ENCODE measurements at regions of chr14 and their contacts with region 1.

Region 1: DNA sequence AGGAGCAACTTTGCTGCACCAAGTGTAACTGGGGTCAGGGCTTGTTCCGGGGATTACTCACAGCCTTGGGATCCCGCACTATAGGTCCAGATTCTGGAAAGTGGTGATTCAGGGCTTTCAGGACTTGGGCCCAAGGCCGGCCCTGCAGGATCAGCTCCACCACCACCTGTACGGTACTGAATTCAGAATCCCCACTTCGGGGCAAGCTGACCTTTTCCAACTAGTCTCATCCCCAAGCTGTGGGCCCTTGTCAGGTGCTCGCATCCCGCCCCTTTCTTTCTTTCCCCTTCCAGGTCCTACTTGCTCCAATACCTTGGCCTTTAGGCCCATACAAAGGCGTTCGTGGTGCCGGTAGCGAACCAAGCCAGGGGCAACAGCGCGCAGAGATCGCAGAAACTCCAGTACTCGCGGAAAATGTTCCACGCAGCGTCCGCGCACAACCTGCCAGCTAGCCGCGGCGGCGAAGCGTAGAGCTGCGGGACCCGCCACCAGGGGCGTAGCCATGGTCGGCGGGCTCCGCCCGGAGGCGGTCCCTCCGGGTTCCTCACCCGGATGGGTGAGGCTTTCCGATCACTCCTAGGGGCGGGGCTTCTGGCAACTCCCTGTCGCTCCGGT is 487 bp downstream of the TINF2 start:
- DNase-seq: peak; percentile 92 to 97 (median 95)
- H3K4me3 ChIP-seq: peak overlapping the region; percentile 79
- H3K4me3 Mint-ChIP-seq: peak overlapping the region; percentile 93 to 99 (median 98)
- H3K27ac ChIP-seq: peak overlapping the region; percentile 99
- H3K27ac Mint-ChIP-seq: peak overlapping the region; percentile 98 to 100 (median 100)
- H3K4me1 ChIP-seq: peaks cover 51% of the 10 kb centered on the region
- H3K4me1 Mint-ChIP-seq: peaks cover 63 to 76% (median 76%) of the 10 kb centered on the region in 3 donors
- H3K27me3 ChIP-seq: no peaks in the 10 kb centered on the region
- H3K27me3 Mint-ChIP-seq: peaks cover 0 to 2% of the 10 kb centered on the region in 2 donors

Region 2: DNA sequence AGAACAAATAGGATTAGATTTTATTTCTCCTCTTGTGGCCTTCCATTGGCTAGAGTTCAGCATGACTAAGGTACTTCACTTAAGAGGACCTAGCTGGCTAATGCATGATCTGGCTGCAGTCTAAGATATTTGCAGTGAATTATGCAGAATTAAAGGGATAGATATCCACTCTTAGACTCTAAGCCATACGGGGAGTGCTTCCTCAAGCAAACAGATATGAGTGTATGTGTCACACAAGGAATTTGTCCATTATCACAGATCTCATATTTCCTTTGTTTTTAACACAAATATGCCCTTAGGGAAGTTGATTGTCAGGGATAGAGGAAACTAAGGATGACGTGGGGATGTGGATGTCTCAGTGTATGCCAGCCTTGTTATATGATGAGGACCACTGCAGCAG is 376.4 kb before region 1 on chr14:
- CTCF ChIA-PET with region 1: no interaction called
- POLR2A ChIA-PET with region 1: no interaction called
- DNase-seq: no peak
- H3K4me3 ChIP-seq: no peak overlapping the region
- H3K4me3 Mint-ChIP-seq: no peak overlapping the region
- H3K27ac ChIP-seq: no peak overlapping the region
- H3K27ac Mint-ChIP-seq: no peak overlapping the region
- H3K4me1 ChIP-seq: no peaks in the 10 kb centered on the region
- H3K4me1 Mint-ChIP-seq: no peaks in the 10 kb centered on the region
- H3K27me3 ChIP-seq: peaks cover 7% of the 10 kb centered on the region
- H3K27me3 Mint-ChIP-seq: peaks cover 3 to 45% of the 10 kb centered on the region in 2 donors

Region 3: GRCh38 chr14:24114536-24115450 is 127.1 kb before region 1 on chr14 and contains the starts of genes DCAF11 and NRL:
- CTCF ChIA-PET with region 1: interaction called, 3 read pairs
- POLR2A ChIA-PET with region 1: interaction called, 13 read pairs
- DNase-seq: peak; percentile 97 to 100 (median 99)
- H3K4me3 ChIP-seq: peak within 1 kb of the TSS; percentile 99
- H3K4me3 Mint-ChIP-seq: peak within 1 kb of the TSS; percentile 96 to 100 (median 98)
- H3K27ac ChIP-seq: peak within 1 kb of the TSS; percentile 98
- H3K27ac Mint-ChIP-seq: peak within 1 kb of the TSS; percentile 98 to 100 (median 99)
- H3K4me1 ChIP-seq: peaks cover 28% of the 10 kb centered on the region
- H3K4me1 Mint-ChIP-seq: peaks cover 30 to 37% (median 36%) of the 10 kb centered on the region in 3 donors
- H3K27me3 ChIP-seq: no peaks in the 10 kb centered on the region
- H3K27me3 Mint-ChIP-seq: peaks cover 0 to 5% of the 10 kb centered on the region in 2 donors
- total RNA-seq, gene DCAF11: 69.0 to 72.4 TPM
- total RNA-seq, gene NRL: 1.5 to 1.6 TPM

Region 4: DNA sequence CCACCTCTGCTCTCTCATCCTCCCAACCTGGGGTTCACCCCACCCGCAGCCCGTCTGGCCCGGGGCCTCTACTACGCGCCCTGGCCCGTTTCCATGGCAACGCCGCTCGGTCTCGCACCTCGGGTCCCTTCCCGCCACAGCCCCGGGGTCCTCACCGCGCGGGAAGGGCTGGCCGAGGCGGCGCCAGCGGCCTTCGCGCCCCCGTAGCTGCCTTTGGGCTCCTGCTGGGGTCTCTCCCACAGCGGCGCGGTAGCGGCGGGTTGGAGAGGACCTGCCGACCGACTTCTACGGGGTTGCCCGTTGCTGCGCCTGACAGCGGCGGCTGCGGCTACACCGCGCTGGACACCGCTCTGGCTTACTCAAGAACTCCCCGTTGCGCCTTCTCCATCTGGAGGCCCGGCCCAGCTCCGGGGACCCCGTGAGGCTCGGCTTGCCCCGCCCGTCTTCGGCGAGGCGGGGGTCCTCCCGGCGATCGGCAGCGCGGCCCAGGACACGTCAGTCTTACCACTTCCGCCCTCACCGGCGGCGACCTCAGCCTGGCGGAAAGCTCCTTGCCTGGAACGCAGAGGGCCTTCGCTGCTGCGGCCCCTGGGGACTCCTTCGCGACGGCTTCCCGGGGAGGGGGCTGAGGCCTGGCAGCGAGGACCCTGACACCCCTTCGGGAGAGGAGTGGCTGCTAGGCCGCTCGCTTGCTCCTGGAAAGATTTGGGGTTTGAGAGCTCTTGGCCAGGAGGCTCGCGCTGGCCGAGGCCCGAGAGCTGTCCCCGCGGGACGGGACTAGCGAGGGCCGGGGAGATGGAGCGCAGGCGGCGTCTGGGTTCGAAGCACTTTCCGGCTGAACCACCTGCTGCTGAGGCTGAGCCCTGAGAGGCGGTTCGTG is 46.5 kb before region 1 on chr14 and contains the start of gene TM9SF1:
- CTCF ChIA-PET with region 1: interaction called, 5 read pairs
- POLR2A ChIA-PET with region 1: interaction called, 41 read pairs
- DNase-seq: peak; percentile 89 to 98 (median 91)
- H3K4me3 ChIP-seq: peak within 1 kb of the TSS; percentile 91
- H3K4me3 Mint-ChIP-seq: peak within 1 kb of the TSS; percentile 83 to 96 (median 94)
- H3K27ac ChIP-seq: peak within 1 kb of the TSS; percentile 100
- H3K27ac Mint-ChIP-seq: peak within 1 kb of the TSS; percentile 96 to 100 (median 99)
- H3K4me1 ChIP-seq: peaks cover 32% of the 10 kb centered on the region
- H3K4me1 Mint-ChIP-seq: peaks cover 37 to 76% (median 56%) of the 10 kb centered on the region in 3 donors
- H3K27me3 ChIP-seq: no peaks in the 10 kb centered on the region
- H3K27me3 Mint-ChIP-seq: peaks cover 0 to 1% of the 10 kb centered on the region in 2 donors
- total RNA-seq, gene TM9SF1: 31.3 to 34.0 TPM

Region 5: GRCh38 chr14:24224618-24225071 is 17.3 kb before region 1 on chr14:
- CTCF ChIA-PET with region 1: interaction called, 22 read pairs
- POLR2A ChIA-PET with region 1: no interaction called
- DNase-seq: no peak
- H3K4me3 ChIP-seq: no peak overlapping the region
- H3K4me3 Mint-ChIP-seq: no peak overlapping the region
- H3K27ac ChIP-seq: no peak overlapping the region
- H3K27ac Mint-ChIP-seq: peak overlapping the region in 5 of 8 donors; percentile 4 to 31 (median 23)
- H3K4me1 ChIP-seq: no peaks in the 10 kb centered on the region
- H3K4me1 Mint-ChIP-seq: peaks cover 18 to 32% (median 23%) of the 10 kb centered on the region in 3 donors
- H3K27me3 ChIP-seq: no peaks in the 10 kb centered on the region
- H3K27me3 Mint-ChIP-seq: no peaks in the 10 kb centered on the region

Region 6: GRCh38 chr14:24289649-24290249 is 47.8 kb after region 1 on chr14:
- CTCF ChIA-PET with region 1: interaction called, 151 read pairs
- POLR2A ChIA-PET with region 1: no interaction called
- DNase-seq: no peak
- H3K4me3 ChIP-seq: no peak overlapping the region
- H3K4me3 Mint-ChIP-seq: no peak overlapping the region
- H3K27ac ChIP-seq: no peak overlapping the region
- H3K27ac Mint-ChIP-seq: peak overlapping the region in 3 of 8 donors; percentile 15 to 73 (median 50)
- H3K4me1 ChIP-seq: no peaks in the 10 kb centered on the region
- H3K4me1 Mint-ChIP-seq: peaks cover 0 to 15% (median 1%) of the 10 kb centered on the region in 3 donors
- H3K27me3 ChIP-seq: no peaks in the 10 kb centered on the region
- H3K27me3 Mint-ChIP-seq: peaks cover 0 to 2% of the 10 kb centered on the region in 2 donors

Region 7: GRCh38 chr14:24310646-24311604 is 69.0 kb after region 1 on chr14 and contains the start of gene LTB4R:
- CTCF ChIA-PET with region 1: interaction called, 146 read pairs
- POLR2A ChIA-PET with region 1: interaction called, 26 read pairs
- DNase-seq: peak; percentile 56 to 82 (median 74)
- H3K4me3 ChIP-seq: peak within 1 kb of the TSS; percentile 58
- H3K4me3 Mint-ChIP-seq: peak within 1 kb of the TSS; percentile 79 to 89 (median 86)
- H3K27ac ChIP-seq: peak within 1 kb of the TSS; percentile 69
- H3K27ac Mint-ChIP-seq: peak within 1 kb of the TSS; percentile 89 to 99 (median 96)
- H3K4me1 ChIP-seq: peaks cover 66% of the 10 kb centered on the region
- H3K4me1 Mint-ChIP-seq: peaks cover 68 to 77% (median 71%) of the 10 kb centered on the region in 3 donors
- H3K27me3 ChIP-seq: no peaks in the 10 kb centered on the region
- H3K27me3 Mint-ChIP-seq: peaks cover 0 to 2% of the 10 kb centered on the region in 2 donors
- total RNA-seq, gene LTB4R: 9.8 to 12.3 TPM

Region 8: DNA sequence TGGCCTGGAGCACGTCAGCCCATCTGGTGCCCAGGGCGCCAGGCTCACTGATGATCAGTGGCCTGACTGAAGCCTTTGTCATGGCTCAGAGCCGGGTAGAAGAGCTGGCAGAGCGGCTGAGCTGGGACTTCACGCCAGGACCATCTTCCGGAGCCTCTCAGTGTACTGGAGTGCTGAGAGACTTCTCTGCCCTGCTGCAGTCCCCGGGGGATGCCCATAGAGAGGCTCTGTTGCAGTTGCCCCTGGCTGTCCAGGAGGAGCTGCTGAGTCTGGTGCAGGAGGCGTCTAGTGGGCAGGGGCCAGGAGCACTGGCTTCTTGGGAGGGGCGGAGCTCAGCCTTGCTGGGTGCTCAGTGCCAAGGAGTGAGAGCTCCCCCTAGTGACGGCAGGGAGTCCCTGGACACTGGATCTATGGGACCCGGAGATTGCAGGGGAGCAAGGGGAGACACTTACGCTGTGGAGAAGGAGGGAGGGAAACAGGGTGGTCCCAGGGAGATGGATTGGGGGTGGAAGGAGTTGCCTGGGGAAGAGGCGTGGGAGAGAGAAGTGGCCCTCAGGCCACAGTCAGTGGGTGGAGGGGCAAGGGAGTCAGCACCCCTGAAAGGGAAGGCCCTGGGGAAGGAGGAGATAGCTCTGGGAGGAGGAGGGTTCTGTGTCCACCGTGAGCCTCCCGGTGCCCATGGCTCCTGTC is 189.8 kb after region 1 on chr14:
- CTCF ChIA-PET with region 1: interaction called, 62 read pairs
- POLR2A ChIA-PET with region 1: interaction called, 44 read pairs
- DNase-seq: peak; percentile 81 to 91 (median 83)
- H3K4me3 ChIP-seq: peak overlapping the region; percentile 82
- H3K4me3 Mint-ChIP-seq: peak overlapping the region; percentile 89 to 95 (median 91)
- H3K27ac ChIP-seq: no peak overlapping the region
- H3K27ac Mint-ChIP-seq: peak overlapping the region; percentile 77 to 97 (median 94)
- H3K4me1 ChIP-seq: peaks cover 48% of the 10 kb centered on the region
- H3K4me1 Mint-ChIP-seq: peaks cover 29 to 55% (median 39%) of the 10 kb centered on the region in 3 donors
- H3K27me3 ChIP-seq: no peaks in the 10 kb centered on the region
- H3K27me3 Mint-ChIP-seq: no peaks in the 10 kb centered on the region

Measured in CD8-positive, alpha-beta memory T cell (primary cell).